Breast epithelium (tissue), 4 donors: ENCODE measurements at regions of chr17 and their contacts with region 1.

Region 1: GRCh38 chr17:49575579-49576087 is at the start of gene NXPH3:
- DNase-seq: peak; percentile 32 to 72
- H3K4me3 ChIP-seq: peak within 1 kb of the TSS; percentile 68 to 93 (median 70)
- H3K27ac ChIP-seq: peak within 1 kb of the TSS; percentile 54 to 83
- H3K4me1 ChIP-seq: peaks cover 0 to 10% of the 10 kb centered on the region in 2 donors
- H3K27me3 ChIP-seq: no peaks in the 10 kb centered on the region
- CTCF ChIP-seq: peak in 1 of 3 donors; percentile 83
- POLR2A ChIP-seq: no peak
- total RNA-seq, gene NXPH3: 3.5 to 7.5 (median 4.5) TPM

Region 2: DNA sequence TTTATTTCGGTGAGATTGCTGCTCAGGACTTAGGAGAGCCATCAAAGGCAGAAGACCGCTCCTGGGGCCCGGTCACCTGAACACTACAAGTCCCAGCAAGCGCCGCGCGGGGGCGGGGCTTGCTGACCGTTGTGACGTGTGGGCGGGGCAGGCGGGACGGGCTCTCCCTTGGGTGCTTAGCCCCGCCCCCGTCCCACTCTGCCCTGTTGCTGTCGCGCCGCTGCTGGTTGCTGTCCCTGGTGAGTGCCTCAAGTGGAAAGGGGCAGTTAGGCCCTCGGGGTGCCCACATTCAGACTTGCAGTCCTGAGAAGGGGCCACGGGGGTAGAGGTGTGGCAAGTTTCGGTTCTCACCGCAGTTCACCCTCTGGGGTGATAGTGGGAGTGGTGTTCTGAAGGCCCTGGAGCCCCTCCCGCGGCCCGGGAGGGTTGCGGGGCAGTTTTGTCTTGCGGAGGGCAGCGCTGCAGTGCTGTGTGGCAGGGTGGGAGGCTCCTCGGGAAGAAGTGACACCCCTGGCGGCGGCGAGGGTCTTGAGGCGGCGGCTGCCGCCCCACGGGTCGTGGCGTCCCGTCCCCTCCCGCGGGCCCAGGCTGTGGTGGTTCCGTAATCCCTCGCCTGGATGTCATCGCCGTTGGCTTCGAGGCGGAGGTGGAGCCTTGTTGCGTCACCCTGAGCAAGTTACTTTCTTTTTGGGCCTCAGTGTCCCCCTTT is 744.6 kb before region 1 on chr17 and contains the start of gene CALCOCO2:
- intact Hi-C with region 1: no loop called
- DNase-seq: peak; percentile 92 to 95
- H3K4me3 ChIP-seq: peak within 1 kb of the TSS; percentile 77 to 95 (median 90)
- H3K27ac ChIP-seq: peak within 1 kb of the TSS; percentile 94 to 95
- H3K4me1 ChIP-seq: no peaks in the 10 kb centered on the region
- H3K27me3 ChIP-seq: no peaks in the 10 kb centered on the region
- CTCF ChIP-seq: peak in 2 of 3 donors; percentile 6 to 20
- POLR2A ChIP-seq: peak; percentile 84
- total RNA-seq, gene CALCOCO2: 134 to 262 (median 146) TPM

Region 3: GRCh38 chr17:49694847-49695683 is 119.4 kb after region 1 on chr17:
- intact Hi-C with region 1: loop called (anchors 1 kb)
- DNase-seq: no peak
- H3K4me3 ChIP-seq: no peak overlapping the region
- H3K27ac ChIP-seq: no peak overlapping the region
- H3K4me1 ChIP-seq: no peaks in the 10 kb centered on the region
- H3K27me3 ChIP-seq: no peaks in the 10 kb centered on the region
- CTCF ChIP-seq: peak; percentile 93 to 96 (median 94)
- POLR2A ChIP-seq: no peak

Region 4: GRCh38 chr17:49851387-49852291 is 276.0 kb after region 1 on chr17:
- intact Hi-C with region 1: loop called (anchors 10 kb)
- DNase-seq: peak; percentile 40 to 72
- H3K4me3 ChIP-seq: peak overlapping the region; percentile 50 to 75 (median 63)
- H3K27ac ChIP-seq: peak overlapping the region; percentile 29 to 52
- H3K4me1 ChIP-seq: peaks cover 5 to 6% of the 10 kb centered on the region in 2 donors
- H3K27me3 ChIP-seq: no peaks in the 10 kb centered on the region
- CTCF ChIP-seq: peak; percentile 60 to 66 (median 61)
- POLR2A ChIP-seq: no peak